ENCODE measurements at regions of chrX and their contacts with region 1.

Region 1: GRCh38 chrX:134622056-134622812 is 36.0 kb downstream of the PLAC1 start:
- DNase-seq: no peak
- H3K4me3 Mint-ChIP-seq: no peak overlapping the region
- H3K27ac Mint-ChIP-seq: no peak overlapping the region
- H3K4me1 Mint-ChIP-seq: peaks cover 23% of the 10 kb centered on the region
- H3K27me3 Mint-ChIP-seq: peaks cover 2% of the 10 kb centered on the region

Region 2: DNA sequence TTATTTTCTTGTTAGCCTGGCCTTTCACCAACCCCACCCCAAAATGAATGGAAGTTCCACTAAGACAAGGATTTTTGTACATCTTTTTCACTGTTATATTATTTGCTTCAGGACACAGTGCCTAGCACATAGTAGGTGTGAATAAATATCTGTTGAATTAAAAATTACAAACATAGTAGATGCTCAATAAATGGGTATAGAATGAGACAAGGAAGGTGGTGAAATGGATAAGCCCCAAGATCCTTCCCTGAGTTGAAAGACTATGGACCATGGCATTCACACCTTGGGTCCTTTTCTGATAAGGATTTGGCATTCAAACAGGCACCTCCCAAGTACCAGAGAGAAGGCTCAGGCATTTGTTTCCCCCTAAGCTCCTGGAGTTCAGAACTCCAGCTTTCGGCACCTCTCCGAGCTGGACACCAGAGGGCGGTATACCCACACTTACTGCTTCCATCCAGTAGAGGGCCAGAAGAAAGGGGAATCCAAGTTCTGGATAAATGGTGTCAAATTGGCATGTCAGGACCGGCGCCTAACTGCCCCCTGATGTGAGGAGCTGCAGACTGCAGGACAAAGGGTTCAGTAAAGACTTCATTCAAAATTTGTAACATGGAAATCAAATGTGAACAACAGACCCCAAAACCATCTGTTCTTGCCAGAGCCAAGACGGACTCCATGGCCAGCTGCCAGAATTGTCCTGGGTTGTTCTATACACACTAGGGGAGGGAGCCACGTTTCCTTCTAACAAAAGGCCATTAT is 829.9 kb before region 1 on chrX:
- intact Hi-C with region 1: no loop called
- DNase-seq: peak; percentile 18
- H3K4me3 Mint-ChIP-seq: no peak overlapping the region
- H3K27ac Mint-ChIP-seq: no peak overlapping the region
- H3K4me1 Mint-ChIP-seq: no peaks in the 10 kb centered on the region
- H3K27me3 Mint-ChIP-seq: no peaks in the 10 kb centered on the region

Region 3: DNA sequence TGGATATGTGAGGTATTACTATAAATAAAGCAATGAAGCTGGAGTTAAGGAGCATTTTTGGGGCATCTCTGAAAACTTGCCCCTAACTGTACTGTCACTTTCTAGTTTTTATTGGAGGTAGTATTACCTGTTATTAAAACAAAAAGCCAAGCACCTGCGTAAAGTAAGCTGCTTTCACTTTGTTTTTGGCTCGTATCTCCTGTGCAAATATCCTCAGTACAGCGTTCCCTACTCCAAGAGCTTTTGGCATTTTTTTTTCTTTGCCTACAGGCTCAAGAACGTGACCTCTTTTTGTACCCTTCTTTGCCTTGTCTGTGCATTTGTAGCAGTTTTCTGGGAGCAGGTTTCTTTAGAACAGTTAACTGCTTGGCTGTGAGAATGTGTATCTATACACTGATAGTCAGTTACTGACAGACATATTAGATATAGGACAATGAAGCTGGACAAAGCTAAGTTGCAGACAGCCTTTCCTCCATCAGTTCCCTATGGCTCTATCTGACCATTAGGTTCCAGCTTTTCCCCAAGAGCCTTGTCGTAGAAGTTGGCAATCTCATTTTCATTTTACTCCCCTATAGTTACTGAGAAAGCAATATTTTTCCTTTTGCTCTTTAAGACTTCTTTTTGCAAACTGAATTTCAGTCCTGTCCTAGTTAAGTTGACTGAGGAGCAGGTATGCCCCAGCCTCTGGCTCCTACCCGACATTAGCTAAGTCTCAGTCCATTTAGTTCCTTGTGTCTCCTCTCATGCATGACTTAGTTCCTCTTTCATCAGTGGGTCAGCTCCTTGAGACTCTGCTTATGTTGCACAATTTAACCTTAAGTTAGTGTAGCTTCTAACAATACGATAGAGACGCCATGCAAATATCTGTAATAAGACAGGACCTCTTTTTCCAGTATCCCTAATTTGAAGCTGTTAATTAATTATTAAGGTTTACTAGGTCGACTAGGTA is 233.8 kb before region 1 on chrX:
- intact Hi-C with region 1: no loop called
- DNase-seq: no peak
- H3K4me3 Mint-ChIP-seq: no peak overlapping the region
- H3K27ac Mint-ChIP-seq: no peak overlapping the region
- H3K4me1 Mint-ChIP-seq: peaks cover 10% of the 10 kb centered on the region
- H3K27me3 Mint-ChIP-seq: no peaks in the 10 kb centered on the region

Region 4: DNA sequence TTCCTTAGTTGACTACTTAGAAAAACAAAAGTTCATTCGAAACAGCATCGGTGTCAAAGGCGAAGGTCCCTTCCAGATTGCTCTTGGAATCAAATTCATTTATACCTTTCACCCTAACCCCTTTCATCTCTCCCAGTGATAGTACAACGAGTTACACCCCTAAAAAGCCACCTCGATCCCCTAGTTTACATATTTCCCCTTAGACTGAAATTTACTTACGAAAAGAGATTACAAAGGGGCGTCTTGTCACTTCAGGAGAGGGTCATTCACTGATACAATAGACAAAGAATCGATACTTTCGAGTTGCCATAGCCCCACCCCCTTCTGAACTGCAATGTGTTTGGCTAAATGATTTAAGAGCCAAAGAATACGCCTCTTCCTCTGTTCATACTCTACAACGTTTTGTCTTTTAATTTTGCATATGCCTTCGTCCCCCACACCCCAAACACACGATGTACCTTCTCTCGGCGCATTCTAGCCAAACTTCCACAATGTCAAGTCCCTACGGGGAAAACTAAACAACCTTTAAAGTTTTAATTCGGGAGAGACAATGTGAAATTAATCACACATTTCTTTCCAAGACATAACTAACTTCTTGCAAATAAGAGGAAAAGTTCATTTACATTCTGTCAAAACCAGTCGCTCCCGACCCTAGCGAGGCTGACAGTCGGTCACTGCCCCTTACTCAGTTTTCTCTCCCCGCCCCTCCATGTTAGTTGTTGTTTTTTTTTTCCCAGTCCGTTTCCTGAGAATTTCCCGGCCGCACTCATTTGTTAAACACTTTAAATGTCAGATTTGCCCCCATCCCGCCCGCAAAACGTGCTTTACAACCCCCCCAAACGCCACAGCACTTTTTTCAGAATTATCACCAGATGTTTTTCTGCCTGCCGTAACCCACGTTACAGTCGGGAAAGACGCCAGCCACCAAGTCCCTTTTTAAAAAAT is 73.7 kb before region 1 on chrX:
- intact Hi-C with region 1: no loop called
- DNase-seq: no peak
- H3K4me3 Mint-ChIP-seq: peak overlapping the region; percentile 89
- H3K27ac Mint-ChIP-seq: peak overlapping the region; percentile 97
- H3K4me1 Mint-ChIP-seq: peaks cover 18% of the 10 kb centered on the region
- H3K27me3 Mint-ChIP-seq: peaks cover 3% of the 10 kb centered on the region

Region 5: DNA sequence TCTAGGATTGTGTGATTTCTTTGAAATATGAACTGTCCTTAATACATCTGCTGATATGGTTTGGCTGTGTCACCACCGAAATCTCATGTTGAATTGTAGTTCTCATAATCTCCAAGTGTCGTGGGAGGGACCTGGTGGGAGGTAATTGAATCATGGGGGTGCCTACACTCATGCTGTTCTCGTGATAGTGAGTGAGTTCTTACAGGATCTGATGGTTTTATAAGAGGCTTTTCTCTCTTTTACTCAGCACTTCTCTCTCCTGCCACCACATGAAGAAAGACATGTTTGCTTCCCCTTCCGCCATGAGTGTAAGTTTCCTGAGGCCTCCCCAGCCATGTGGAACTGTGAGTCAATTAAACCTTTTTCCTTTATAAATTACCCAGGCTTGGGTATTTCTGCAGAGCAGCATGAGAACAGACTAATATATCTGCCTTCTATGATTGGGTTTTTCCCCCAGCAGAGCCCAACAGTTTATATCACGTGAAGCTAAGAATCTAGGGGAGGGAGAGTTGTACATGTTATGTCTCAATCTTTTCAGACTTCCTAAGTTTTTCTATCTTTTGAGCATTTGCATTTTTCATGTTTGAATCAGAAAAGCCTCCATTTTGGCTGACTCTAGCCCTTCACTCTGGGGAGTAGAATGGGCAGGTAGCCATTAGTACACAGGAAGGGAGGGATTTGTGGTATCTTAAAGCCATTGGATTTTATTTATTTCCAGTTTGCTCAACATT is 22.9 kb before region 1 on chrX:
- intact Hi-C with region 1: loop called (anchors 1 kb)
- DNase-seq: no peak
- H3K4me3 Mint-ChIP-seq: no peak overlapping the region
- H3K27ac Mint-ChIP-seq: peak overlapping the region; percentile 33
- H3K4me1 Mint-ChIP-seq: peaks cover 11% of the 10 kb centered on the region
- H3K27me3 Mint-ChIP-seq: peaks cover 19% of the 10 kb centered on the region

Region 6: DNA sequence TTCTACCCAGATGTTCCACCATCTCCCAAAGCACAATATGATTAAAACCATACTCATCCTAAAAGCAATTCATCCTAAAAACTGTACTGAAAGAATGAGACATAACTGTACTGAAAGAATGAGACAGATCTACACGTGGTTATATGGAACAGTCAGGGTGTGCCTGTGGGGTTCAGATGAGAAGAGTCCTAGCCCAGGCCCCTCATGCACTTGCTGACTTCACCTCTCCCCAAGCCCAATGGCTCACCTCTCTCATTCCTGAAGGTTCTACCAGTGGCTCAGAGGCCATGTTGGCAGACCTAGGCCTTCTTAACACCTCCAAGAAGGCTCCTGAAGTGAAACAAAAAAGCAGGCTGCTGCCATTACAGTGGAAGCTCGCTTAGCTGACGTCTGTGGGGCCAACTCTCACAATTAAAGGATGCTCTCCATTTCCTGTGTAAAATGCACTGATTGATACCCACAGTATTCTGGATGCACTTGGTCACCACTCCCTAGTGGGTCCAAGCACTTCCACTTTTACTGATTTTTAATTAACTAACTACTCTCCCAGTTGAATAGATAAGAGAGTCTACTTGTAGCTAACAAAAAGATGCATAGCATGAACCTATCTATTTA is 32.3 kb after region 1 on chrX:
- intact Hi-C with region 1: loop called (anchors 1 kb)
- DNase-seq: no peak
- H3K4me3 Mint-ChIP-seq: no peak overlapping the region
- H3K27ac Mint-ChIP-seq: no peak overlapping the region
- H3K4me1 Mint-ChIP-seq: peaks cover 8% of the 10 kb centered on the region
- H3K27me3 Mint-ChIP-seq: no peaks in the 10 kb centered on the region

Region 7: GRCh38 chrX:134718105-134718965 is 96.1 kb after region 1 on chrX:
- intact Hi-C with region 1: loop called (anchors 5 kb)
- DNase-seq: no peak
- H3K4me3 Mint-ChIP-seq: no peak overlapping the region
- H3K27ac Mint-ChIP-seq: peak overlapping the region; percentile 47
- H3K4me1 Mint-ChIP-seq: peaks cover 14% of the 10 kb centered on the region
- H3K27me3 Mint-ChIP-seq: no peaks in the 10 kb centered on the region

Measured in activated T-helper 2 cell treated with anti-CD3 and anti-CD28 coated beads, Interferon-gamma antibody, Interleukin-2, Interleukin-4, amounts not matched to agents 10 μg/mL and 5 μg/mL and 100 μg/mL, durations not matched to agents 14 hours and 24 hours and 36 hours (primary cell).